PC-9 (cell line): ENCODE measurements at regions of chr12 and their contacts with region 1.

Region 1: GRCh38 chr12:55940065-55940732 is 9.2 kb downstream of the DGKA start:
- DNase-seq: peak; percentile 62 to 87
- H3K4me3 ChIP-seq: no peak overlapping the region
- H3K27ac ChIP-seq: 0 out of 2 replicates have a peak overlapping the region, but pooled peaks have one; percentile 16
- H3K4me1 ChIP-seq: peaks cover 27% of the 10 kb centered on the region
- H3K27me3 ChIP-seq: no peaks in the 10 kb centered on the region
- CTCF ChIP-seq: peak; percentile 86

Region 2: GRCh38 chr12:55757701-55758100 is 182.5 kb before region 1 on chr12:
- CTCF ChIA-PET with region 1: no interaction called
- POLR2A ChIA-PET with region 1: interaction called, 11 read pairs
- intact Hi-C with region 1: no loop called
- DNase-seq: no peak
- H3K4me3 ChIP-seq: no peak overlapping the region
- H3K27ac ChIP-seq: no peak overlapping the region
- H3K4me1 ChIP-seq: no peaks in the 10 kb centered on the region
- H3K27me3 ChIP-seq: no peaks in the 10 kb centered on the region
- CTCF ChIP-seq: no peak

Region 3: GRCh38 chr12:55865327-55865726 is 74.9 kb before region 1 on chr12:
- CTCF ChIA-PET with region 1: interaction called, 3 read pairs
- POLR2A ChIA-PET with region 1: interaction called, 10 read pairs
- intact Hi-C with region 1: no loop called
- DNase-seq: no peak
- H3K4me3 ChIP-seq: no peak overlapping the region
- H3K27ac ChIP-seq: no peak overlapping the region
- H3K4me1 ChIP-seq: no peaks in the 10 kb centered on the region
- H3K27me3 ChIP-seq: no peaks in the 10 kb centered on the region
- CTCF ChIP-seq: no peak

Region 4: DNA sequence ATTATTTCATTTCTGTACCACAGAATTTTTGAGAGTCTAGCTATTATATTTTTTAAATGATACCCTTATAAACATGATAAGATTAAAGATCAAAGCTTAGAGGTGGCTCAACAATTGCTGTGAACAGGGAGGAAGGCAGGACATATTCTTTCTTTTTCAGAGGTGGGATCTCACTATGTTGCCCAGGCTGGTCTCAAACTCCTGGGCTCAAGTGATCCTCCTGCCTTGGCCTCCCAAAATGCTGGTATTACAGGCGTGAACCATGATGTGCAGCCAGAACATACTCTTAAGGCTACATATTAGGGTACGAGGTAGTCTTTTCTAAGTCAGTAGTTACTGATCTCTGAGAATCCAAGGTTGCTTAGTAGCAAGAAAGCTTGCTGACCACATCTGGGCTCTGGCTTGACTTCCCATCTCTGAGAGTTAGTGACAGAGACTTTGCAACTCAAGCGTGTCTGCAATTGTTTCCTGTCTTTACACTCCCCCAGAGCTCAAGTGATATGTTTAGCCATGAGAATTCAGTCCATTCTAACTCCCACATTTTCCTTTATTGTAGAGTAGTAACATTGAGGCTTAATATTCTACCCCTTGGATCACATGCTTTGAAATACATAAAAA is 42.2 kb after region 1 on chr12:
- CTCF ChIA-PET with region 1: no interaction called
- POLR2A ChIA-PET with region 1: no interaction called
- intact Hi-C with region 1: no loop called
- DNase-seq: no peak
- H3K4me3 ChIP-seq: no peak overlapping the region
- H3K27ac ChIP-seq: no peak overlapping the region
- H3K4me1 ChIP-seq: peaks cover 17% of the 10 kb centered on the region
- H3K27me3 ChIP-seq: no peaks in the 10 kb centered on the region
- CTCF ChIP-seq: no peak

Region 5: GRCh38 chr12:56084958-56085543 is 144.9 kb after region 1 on chr12:
- CTCF ChIA-PET with region 1: no interaction called
- POLR2A ChIA-PET with region 1: interaction called, 10 read pairs
- intact Hi-C with region 1: no loop called
- DNase-seq: no peak
- H3K4me3 ChIP-seq: no peak overlapping the region
- H3K27ac ChIP-seq: no peak overlapping the region
- H3K4me1 ChIP-seq: peaks cover 42% of the 10 kb centered on the region
- H3K27me3 ChIP-seq: no peaks in the 10 kb centered on the region
- CTCF ChIP-seq: peak; percentile 48; the same call in 1 of the 2 replicates

Region 6: GRCh38 chr12:56571126-56571525 is 630.9 kb after region 1 on chr12:
- CTCF ChIA-PET with region 1: no interaction called
- POLR2A ChIA-PET with region 1: no interaction called
- intact Hi-C with region 1: no loop called
- DNase-seq: no peak
- H3K4me3 ChIP-seq: no peak overlapping the region
- H3K27ac ChIP-seq: no peak overlapping the region
- H3K4me1 ChIP-seq: peaks cover 29% of the 10 kb centered on the region
- H3K27me3 ChIP-seq: no peaks in the 10 kb centered on the region
- CTCF ChIP-seq: no peak